ENCODE measurements at regions of chr5 and their contacts with region 1.

Region 1: DNA sequence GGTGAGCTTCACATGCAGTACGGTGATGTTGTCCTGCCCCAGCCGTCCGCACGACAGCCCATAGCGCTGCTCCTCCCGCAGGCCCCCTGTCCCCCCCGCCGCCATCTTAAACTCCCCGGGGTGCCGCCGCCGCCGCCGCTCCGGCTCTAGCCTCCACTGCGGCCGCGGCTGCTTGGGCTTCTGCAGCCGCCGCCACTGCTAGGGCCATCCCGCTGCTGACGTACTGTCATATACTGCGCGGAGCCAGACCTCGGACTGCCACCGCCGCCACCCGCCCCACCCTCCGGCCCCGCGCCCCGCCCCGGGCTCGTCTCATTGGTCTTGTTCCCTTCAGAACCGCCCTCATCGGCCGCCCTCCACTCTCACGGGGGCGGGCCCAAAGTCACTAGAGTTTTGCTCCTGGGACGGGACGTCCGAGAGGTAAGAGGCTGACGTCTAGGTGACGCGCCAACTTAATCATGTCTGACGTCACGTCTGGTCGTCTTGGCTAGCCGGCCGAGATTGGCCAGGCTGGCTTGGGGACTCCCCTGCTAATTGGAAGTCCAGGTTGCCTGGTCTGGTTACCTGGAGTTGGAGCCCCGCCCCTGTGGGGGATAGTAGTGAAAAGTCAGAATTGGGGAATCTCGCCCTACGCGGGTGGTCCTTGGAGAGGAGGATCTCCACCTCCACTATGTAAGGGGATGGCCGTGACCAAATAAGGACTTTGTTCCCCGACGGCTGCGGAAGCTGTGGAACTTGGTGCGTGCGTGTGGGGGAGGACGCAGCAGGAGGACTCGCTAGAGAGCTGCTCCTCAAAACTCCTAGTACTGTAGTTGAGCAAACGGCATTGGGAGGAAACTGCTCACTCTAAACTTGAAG is at the start of gene ELL2:
- DNase-seq: peak; percentile 88
- H3K4me3 ChIP-seq: peak within 1 kb of the TSS; percentile 70
- H3K27ac ChIP-seq: no peak within 1 kb of the TSS
- H3K4me1 ChIP-seq: peaks cover 5% of the 10 kb centered on the region
- CTCF ChIP-seq: no peak
- total RNA-seq, gene ELL2: 0.98 and 2.1 TPM in 2 replicates

Region 2: DNA sequence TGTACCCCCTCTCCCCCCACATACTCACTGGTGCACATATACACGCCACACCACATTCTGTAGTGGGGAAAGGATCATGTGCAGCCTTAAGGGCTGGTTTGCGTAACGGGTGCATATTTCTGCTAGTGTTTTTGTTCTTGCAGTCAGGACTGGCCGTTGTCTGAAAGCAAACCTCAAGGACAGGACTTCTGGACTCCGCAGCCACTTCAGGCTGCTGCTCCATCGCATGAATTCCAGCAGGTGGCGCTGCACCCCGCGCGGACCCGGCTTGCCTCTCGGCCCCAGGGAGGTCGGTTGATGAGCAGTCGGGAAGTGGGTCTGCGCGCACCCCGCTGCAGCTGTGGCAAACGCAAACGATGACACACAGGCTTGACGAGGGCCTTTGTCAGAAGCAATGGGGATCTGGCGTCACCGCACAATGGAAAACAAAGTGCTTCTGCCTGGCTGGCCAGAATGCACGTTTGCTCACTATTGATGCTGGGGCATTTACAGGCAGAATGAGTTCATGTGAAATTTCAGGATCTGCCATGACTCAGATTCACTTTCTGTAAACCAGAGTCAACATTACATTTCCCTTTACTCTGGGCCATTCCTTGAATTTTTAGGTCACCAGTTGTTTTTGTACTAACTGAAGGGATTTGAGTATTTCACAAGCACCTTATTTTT is 103.1 kb before region 1 on chr5:
- CTCF ChIA-PET with region 1: no interaction called
- POLR2A ChIA-PET with region 1: no interaction called
- intact Hi-C with region 1: loop called (anchors 2 kb)
- DNase-seq: peak; percentile 83
- H3K4me3 ChIP-seq: no peak overlapping the region
- H3K27ac ChIP-seq: no peak overlapping the region
- H3K4me1 ChIP-seq: peaks cover 15% of the 10 kb centered on the region
- CTCF ChIP-seq: peak; percentile 96

Region 3: GRCh38 chr5:96049398-96050272 is 87.8 kb after region 1 on chr5:
- CTCF ChIA-PET with region 1: interaction called, 11 read pairs
- POLR2A ChIA-PET with region 1: interaction called, 3 read pairs
- intact Hi-C with region 1: no loop called
- DNase-seq: no peak
- H3K4me3 ChIP-seq: no peak overlapping the region
- H3K27ac ChIP-seq: no peak overlapping the region
- H3K4me1 ChIP-seq: no peaks in the 10 kb centered on the region
- CTCF ChIP-seq: no peak

Region 4: DNA sequence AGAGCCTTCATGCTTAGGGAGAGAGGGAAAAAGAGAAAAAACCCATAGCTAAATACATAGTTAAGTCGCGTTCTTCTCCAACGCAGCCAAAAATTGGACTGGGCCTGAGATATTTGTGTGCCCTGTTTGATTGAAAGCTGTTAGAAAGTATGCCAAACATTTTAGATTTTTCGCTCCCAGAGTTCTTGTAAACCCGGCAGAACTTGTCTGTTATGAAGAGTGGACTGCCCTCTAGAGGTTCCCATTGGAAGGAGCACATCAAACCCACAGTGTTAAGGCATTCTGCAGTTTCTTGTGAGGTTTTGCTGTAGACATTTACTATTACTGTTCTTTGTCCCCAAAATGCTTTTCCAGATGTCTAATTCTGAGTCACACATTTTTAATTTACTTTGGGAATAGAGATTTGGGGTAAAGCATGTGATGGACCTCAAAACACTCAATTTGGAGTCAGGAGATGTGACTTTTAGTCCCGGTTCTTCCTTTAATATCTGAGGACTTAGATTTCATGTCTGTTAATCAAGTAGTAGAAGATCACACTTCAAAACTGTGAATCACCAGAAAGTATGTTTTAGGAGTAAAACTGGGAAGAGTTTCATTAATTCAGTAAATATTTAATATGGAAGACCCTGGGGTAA is 374.6 kb after region 1 on chr5:
- CTCF ChIA-PET with region 1: no interaction called
- POLR2A ChIA-PET with region 1: no interaction called
- intact Hi-C with region 1: loop called (anchors 5 kb)
- DNase-seq: peak; percentile 65
- H3K4me3 ChIP-seq: no peak overlapping the region
- H3K27ac ChIP-seq: no peak overlapping the region
- H3K4me1 ChIP-seq: no peaks in the 10 kb centered on the region
- CTCF ChIP-seq: peak; percentile 94

Region 5: GRCh38 chr5:96439477-96440184 is 477.8 kb after region 1 on chr5:
- CTCF ChIA-PET with region 1: no interaction called
- POLR2A ChIA-PET with region 1: no interaction called
- intact Hi-C with region 1: loop called (anchors 5 kb)
- DNase-seq: peak; percentile 69
- H3K4me3 ChIP-seq: peak overlapping the region; percentile 41
- H3K27ac ChIP-seq: peak overlapping the region; percentile 70
- H3K4me1 ChIP-seq: peaks cover 17% of the 10 kb centered on the region
- CTCF ChIP-seq: peak; percentile 71

Measured in OCI-LY7 (cell line).